Naive thymus-derived CD4-positive, alpha-beta T cell (primary cell): ENCODE measurements at regions of chr1 and their contacts with region 1.

Region 1: DNA sequence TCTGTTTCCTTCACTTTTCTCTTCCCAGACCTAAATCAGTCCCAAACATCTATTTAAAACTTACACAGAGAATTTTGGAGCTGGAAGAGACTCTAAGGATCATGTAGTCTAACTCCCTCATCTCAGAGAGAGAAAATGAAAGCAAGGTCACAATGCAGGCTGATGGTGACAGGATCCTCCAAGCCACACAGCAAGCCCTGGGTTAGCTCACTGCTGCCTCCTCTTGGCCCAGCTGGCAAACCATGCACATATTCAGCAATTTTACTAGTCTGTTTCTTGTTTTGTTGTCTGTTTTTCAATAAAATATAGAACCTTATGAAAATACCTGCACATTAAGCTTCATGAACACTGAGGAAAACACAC is 27.7 kb upstream of the LY9 start:
- DNase-seq: peak; percentile 66 to 89 (median 82)
- ATAC-seq: peak; percentile 98
- H3K4me3 ChIP-seq: peak overlapping the region; percentile 48
- H3K4me3 Mint-ChIP-seq: peak overlapping the region; percentile 61 to 94 (median 82)
- H3K27ac ChIP-seq: peak overlapping the region; percentile 56
- H3K27ac Mint-ChIP-seq: peak overlapping the region; percentile 89 to 99 (median 96)
- H3K4me1 ChIP-seq: peaks cover 16% of the 10 kb centered on the region in 2 donors
- H3K4me1 Mint-ChIP-seq: peaks cover 19 to 29% (median 21%) of the 10 kb centered on the region in 7 donors
- H3K27me3 ChIP-seq: no peaks in the 10 kb centered on the region
- H3K27me3 Mint-ChIP-seq: no peaks in the 10 kb centered on the region

Region 2: DNA sequence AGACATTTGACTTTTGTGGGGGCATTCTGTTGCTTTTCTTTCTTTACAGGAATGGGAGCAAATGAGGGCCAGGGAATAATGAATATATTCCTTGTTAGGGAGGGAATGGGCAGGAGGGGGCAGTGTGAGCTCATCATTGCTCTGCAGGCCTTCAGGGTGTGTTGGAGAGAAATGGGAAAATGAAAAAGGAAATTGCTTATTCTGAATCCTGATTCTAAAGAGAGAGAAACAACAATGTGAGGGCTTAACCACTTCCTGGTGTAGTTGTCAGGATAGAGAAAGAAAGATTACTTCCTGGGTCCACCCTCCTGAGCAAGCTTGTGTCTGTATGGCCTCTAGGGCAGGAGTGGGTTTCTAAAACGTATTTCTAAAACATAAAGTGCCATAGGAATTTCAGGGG is 339.6 kb before region 1 on chr1:
- CTCF ChIA-PET with region 1: no interaction called
- POLR2A ChIA-PET with region 1: no interaction called
- intact Hi-C with region 1: loop called in 1 of 2 experiments (anchors 1 kb)
- DNase-seq: peak in 6 of 9 donors; percentile 35 to 61 (median 47)
- ATAC-seq: peak; percentile 54
- H3K4me3 ChIP-seq: no peak overlapping the region
- H3K4me3 Mint-ChIP-seq: peak overlapping the region; percentile 3 to 74 (median 62)
- H3K27ac ChIP-seq: peak overlapping the region; percentile 68
- H3K27ac Mint-ChIP-seq: peak overlapping the region; percentile 84 to 99 (median 91)
- H3K4me1 ChIP-seq: peaks cover 55 to 56% of the 10 kb centered on the region in 2 donors
- H3K4me1 Mint-ChIP-seq: peaks cover 32 to 77% (median 68%) of the 10 kb centered on the region in 7 donors
- H3K27me3 ChIP-seq: no peaks in the 10 kb centered on the region
- H3K27me3 Mint-ChIP-seq: no peaks in the 10 kb centered on the region

Region 3: DNA sequence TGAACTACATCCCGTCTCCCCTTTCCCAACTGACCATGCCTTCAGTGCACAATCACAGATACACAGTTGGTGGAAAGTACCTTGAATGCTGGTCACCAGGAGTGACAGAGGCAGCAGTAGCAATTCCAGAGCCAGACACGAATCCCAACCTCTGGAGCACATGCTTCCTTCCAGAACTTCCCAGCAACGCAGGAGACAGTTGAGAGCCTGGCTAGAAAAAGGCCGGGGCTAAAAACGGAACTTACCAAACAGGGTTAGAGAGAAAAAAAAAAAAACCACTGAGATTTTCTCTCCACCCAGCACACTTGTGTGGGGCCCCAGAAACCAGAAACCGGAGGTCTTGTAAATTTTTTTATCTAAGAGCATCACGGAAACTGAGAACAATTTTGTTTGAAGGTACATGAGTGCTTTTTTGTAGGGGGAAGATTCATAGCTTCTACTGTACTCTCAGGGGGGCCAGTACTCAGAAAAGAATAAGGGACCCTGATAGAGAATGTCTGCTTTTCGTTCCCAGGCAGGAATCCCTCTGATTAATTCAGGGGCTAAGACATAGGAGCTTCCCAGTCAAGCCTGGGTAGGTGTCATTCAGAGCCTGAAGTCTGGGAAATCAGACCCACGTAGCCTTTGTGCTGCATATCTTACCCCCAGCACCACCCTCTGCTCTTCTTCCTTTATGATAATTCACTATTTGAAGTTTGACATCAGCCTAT is 56.5 kb before region 1 on chr1 and contains the start of gene CD48:
- CTCF ChIA-PET with region 1: interaction called, 16 read pairs
- POLR2A ChIA-PET with region 1: interaction called, 9 read pairs
- intact Hi-C with region 1: loop called in 1 of 2 experiments (anchors 1 kb)
- DNase-seq: peak in 8 of 9 donors; percentile 39 to 88 (median 82)
- ATAC-seq: peak; percentile 67
- H3K4me3 ChIP-seq: peak within 1 kb of the TSS; percentile 90
- H3K4me3 Mint-ChIP-seq: no peak within 1 kb of the TSS
- H3K27ac ChIP-seq: peak within 1 kb of the TSS; percentile 99
- H3K27ac Mint-ChIP-seq: no peak within 1 kb of the TSS
- H3K4me1 ChIP-seq: peaks cover 52 to 60% of the 10 kb centered on the region in 2 donors
- H3K4me1 Mint-ChIP-seq: peaks cover 22 to 49% (median 44%) of the 10 kb centered on the region in 7 donors
- H3K27me3 ChIP-seq: no peaks in the 10 kb centered on the region
- H3K27me3 Mint-ChIP-seq: no peaks in the 10 kb centered on the region
- total RNA-seq, gene CD48: 253 to 438 (median 358) TPM

Region 4: DNA sequence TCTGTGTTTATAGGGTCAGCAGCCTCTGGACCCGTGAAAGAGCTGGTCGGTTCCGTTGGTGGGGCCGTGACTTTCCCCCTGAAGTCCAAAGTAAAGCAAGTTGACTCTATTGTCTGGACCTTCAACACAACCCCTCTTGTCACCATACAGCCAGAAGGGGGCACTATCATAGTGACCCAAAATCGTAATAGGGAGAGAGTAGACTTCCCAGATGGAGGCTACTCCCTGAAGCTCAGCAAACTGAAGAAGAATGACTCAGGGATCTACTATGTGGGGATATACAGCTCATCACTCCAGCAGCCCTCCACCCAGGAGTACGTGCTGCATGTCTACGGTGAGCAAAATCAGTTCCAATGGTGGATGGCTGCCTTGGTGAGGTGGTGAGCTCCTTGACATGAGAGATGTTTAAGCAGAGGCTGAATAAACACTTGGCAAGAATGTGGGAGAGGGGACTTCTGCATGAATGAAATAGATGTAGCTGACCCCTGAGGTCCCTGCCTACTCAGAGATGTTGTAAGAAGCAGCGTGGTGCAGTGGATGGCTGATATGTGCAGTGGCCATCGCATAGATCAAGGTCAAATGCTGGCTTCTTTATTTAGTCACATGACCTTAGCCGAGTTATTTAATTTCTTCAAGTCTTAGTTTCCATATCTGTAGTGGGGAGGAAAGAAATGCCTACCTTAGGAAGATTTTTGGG is 19.9 kb before region 1 on chr1:
- CTCF ChIA-PET with region 1: interaction called, 14 read pairs
- POLR2A ChIA-PET with region 1: no interaction called
- intact Hi-C with region 1: loop called in 1 of 2 experiments (anchors 1 kb)
- DNase-seq: no peak
- ATAC-seq: no peak
- H3K4me3 ChIP-seq: no peak overlapping the region
- H3K4me3 Mint-ChIP-seq: no peak overlapping the region
- H3K27ac ChIP-seq: no peak overlapping the region
- H3K27ac Mint-ChIP-seq: peak overlapping the region in 1 of 9 donors; percentile 35
- H3K4me1 ChIP-seq: peaks cover 20 to 83% of the 10 kb centered on the region in 2 donors
- H3K4me1 Mint-ChIP-seq: peaks cover 30 to 78% (median 39%) of the 10 kb centered on the region in 7 donors
- H3K27me3 ChIP-seq: no peaks in the 10 kb centered on the region
- H3K27me3 Mint-ChIP-seq: no peaks in the 10 kb centered on the region

Region 5: GRCh38 chr1:160935527-160936258 is 167.4 kb after region 1 on chr1:
- CTCF ChIA-PET with region 1: no interaction called
- POLR2A ChIA-PET with region 1: no interaction called
- intact Hi-C with region 1: no loop called
- DNase-seq: no peak
- ATAC-seq: no peak
- H3K4me3 ChIP-seq: no peak overlapping the region
- H3K4me3 Mint-ChIP-seq: no peak overlapping the region
- H3K27ac ChIP-seq: no peak overlapping the region
- H3K27ac Mint-ChIP-seq: no peak overlapping the region
- H3K4me1 ChIP-seq: no peaks in the 10 kb centered on the region
- H3K4me1 Mint-ChIP-seq: peaks cover 0 to 2% (median 0%) of the 10 kb centered on the region in 7 donors
- H3K27me3 ChIP-seq: no peaks in the 10 kb centered on the region
- H3K27me3 Mint-ChIP-seq: peaks cover 0 to 43% (median 0%) of the 10 kb centered on the region in 5 donors

Region 6: GRCh38 chr1:160951443-160952128 is 183.3 kb after region 1 on chr1:
- CTCF ChIA-PET with region 1: interaction called, 5 read pairs
- POLR2A ChIA-PET with region 1: no interaction called
- intact Hi-C with region 1: loop called in 1 of 2 experiments (anchors 1 kb)
- DNase-seq: peak; percentile 53 to 80 (median 71)
- ATAC-seq: peak; percentile 92
- H3K4me3 ChIP-seq: no peak overlapping the region
- H3K4me3 Mint-ChIP-seq: no peak overlapping the region
- H3K27ac ChIP-seq: no peak overlapping the region
- H3K27ac Mint-ChIP-seq: peak overlapping the region in 2 of 9 donors; percentile 26 to 48
- H3K4me1 ChIP-seq: peaks cover 0 to 16% of the 10 kb centered on the region in 2 donors
- H3K4me1 Mint-ChIP-seq: peaks cover 6 to 21% (median 11%) of the 10 kb centered on the region in 7 donors
- H3K27me3 ChIP-seq: no peaks in the 10 kb centered on the region
- H3K27me3 Mint-ChIP-seq: no peaks in the 10 kb centered on the region

Region 7: DNA sequence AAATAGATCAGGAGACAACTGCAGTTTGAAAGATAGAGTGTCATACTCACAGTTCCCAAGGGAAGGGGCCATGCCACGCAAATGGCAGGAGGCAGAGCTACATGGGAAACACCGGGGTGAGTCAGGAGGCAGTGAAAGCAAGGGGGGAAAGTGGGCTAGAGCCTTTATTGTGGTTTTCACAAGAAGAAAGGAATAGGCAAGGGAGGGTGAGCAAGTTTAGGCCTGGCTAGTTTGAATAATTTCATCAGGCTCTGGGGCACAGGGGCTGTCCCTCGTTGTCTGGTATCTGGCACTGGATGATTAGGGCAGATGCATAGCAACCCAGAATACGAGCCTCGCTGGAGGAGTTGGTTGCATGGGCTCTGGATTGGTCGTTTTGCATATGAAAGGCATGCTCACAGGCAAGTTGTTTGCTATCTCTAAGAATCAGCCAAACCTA is 203.4 kb after region 1 on chr1:
- CTCF ChIA-PET with region 1: no interaction called
- POLR2A ChIA-PET with region 1: no interaction called
- intact Hi-C with region 1: no loop called
- DNase-seq: no peak
- ATAC-seq: no peak
- H3K4me3 ChIP-seq: no peak overlapping the region
- H3K4me3 Mint-ChIP-seq: no peak overlapping the region
- H3K27ac ChIP-seq: no peak overlapping the region
- H3K27ac Mint-ChIP-seq: no peak overlapping the region
- H3K4me1 ChIP-seq: no peaks in the 10 kb centered on the region
- H3K4me1 Mint-ChIP-seq: no peaks in the 10 kb centered on the region
- H3K27me3 ChIP-seq: no peaks in the 10 kb centered on the region
- H3K27me3 Mint-ChIP-seq: peaks cover 0 to 21% (median 0%) of the 10 kb centered on the region in 5 donors

Region 8: GRCh38 chr1:161688946-161689345 is 920.7 kb after region 1 on chr1:
- CTCF ChIA-PET with region 1: no interaction called
- POLR2A ChIA-PET with region 1: no interaction called
- intact Hi-C with region 1: no loop called
- DNase-seq: no peak
- ATAC-seq: no peak
- H3K4me3 ChIP-seq: no peak overlapping the region
- H3K4me3 Mint-ChIP-seq: no peak overlapping the region
- H3K27ac ChIP-seq: no peak overlapping the region
- H3K27ac Mint-ChIP-seq: no peak overlapping the region
- H3K4me1 ChIP-seq: no peaks in the 10 kb centered on the region
- H3K4me1 Mint-ChIP-seq: peaks cover 0 to 1% (median 0%) of the 10 kb centered on the region in 7 donors
- H3K27me3 ChIP-seq: no peaks in the 10 kb centered on the region
- H3K27me3 Mint-ChIP-seq: peaks cover 5 to 50% (median 27%) of the 10 kb centered on the region in 5 donors